Activated CD4-positive, alpha-beta T cell treated with anti-CD3 and anti-CD28 coated beads for 36 hours (primary cell): ENCODE measurements at regions of chr20 and their contacts with region 1.

Region 1: GRCh38 chr20:2688041-2688591 is 4.5 kb upstream of the EBF4 start:
- DNase-seq: peak; percentile 91
- ATAC-seq: peak; percentile 95
- H3K4me3 Mint-ChIP-seq: no peak overlapping the region
- H3K27ac Mint-ChIP-seq: peak overlapping the region; percentile 33
- H3K4me1 Mint-ChIP-seq: peaks cover 18% of the 10 kb centered on the region
- H3K27me3 Mint-ChIP-seq: peaks cover 18% of the 10 kb centered on the region

Region 2: GRCh38 chr20:2698921-2699335 is 10.8 kb after region 1 on chr20:
- CTCF ChIA-PET with region 1: no interaction called
- POLR2A ChIA-PET with region 1: no interaction called
- intact Hi-C with region 1: no loop called
- DNase-seq: no peak
- ATAC-seq: no peak
- H3K4me3 Mint-ChIP-seq: no peak overlapping the region
- H3K27ac Mint-ChIP-seq: no peak overlapping the region
- H3K4me1 Mint-ChIP-seq: no peaks in the 10 kb centered on the region
- H3K27me3 Mint-ChIP-seq: peaks cover 30% of the 10 kb centered on the region

Region 3: DNA sequence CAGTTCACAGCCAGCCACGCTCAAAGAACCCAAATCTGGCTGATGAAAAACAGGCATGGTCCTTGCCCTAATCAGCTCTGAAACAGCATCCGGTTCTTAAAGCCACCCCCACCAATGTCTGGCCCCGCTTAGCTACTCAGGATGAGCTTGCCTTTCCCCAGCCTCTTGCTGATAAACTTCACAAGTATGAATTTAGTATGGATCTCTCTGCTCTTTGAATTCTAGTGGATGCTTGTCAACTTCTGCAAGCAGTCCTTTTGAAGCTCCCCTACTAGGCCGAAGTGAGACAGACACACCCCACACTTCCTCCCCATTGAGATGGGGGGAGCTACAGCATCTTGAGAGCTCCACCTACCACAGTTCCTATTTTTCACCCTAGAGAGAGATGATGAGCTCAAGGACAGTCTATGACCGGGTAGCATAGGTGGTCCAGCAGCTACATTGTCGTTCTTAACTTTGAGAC is 41.2 kb after region 1 on chr20:
- CTCF ChIA-PET with region 1: interaction called, 30 read pairs
- POLR2A ChIA-PET with region 1: no interaction called
- intact Hi-C with region 1: no loop called
- DNase-seq: peak; percentile 36
- ATAC-seq: peak; percentile 90
- H3K4me3 Mint-ChIP-seq: peak overlapping the region; percentile 2
- H3K27ac Mint-ChIP-seq: peak overlapping the region; percentile 79
- H3K4me1 Mint-ChIP-seq: peaks cover 21% of the 10 kb centered on the region
- H3K27me3 Mint-ChIP-seq: no peaks in the 10 kb centered on the region

Region 4: DNA sequence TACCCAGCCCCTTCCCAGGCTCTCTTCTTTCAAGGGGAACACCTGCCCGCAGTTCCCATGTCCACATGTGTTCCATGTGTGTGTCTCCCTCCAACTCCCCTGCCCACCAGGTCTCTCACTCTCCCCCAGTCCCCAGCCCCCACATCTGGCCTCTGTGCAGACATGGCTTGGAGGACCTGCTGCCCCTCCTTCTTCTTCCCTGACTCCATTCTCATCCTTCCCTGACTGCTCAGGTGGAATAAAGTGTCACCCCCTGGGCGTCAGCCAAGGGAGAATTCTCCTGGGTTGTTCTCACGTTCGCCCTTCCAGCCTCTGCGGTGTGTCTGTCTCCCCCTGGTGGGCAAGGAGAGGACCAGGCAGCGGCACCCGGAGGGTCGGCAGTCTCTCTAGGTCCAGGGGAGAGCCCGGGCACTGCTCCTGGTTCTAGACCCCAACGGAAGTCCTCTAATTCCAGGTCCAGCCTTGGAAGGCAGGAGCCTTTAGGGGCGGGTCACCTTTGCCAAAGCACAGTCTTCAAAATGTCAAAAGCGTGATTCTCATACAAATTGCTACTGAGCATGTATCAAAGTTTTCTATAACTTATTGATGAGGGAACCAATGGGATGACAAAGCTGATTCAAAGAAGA is 54.9 kb after region 1 on chr20:
- CTCF ChIA-PET with region 1: interaction called, 71 read pairs
- POLR2A ChIA-PET with region 1: no interaction called
- intact Hi-C with region 1: loop called (anchors 1 kb)
- DNase-seq: peak; percentile 83
- ATAC-seq: peak; percentile 73
- H3K4me3 Mint-ChIP-seq: no peak overlapping the region
- H3K27ac Mint-ChIP-seq: peak overlapping the region; percentile 63
- H3K4me1 Mint-ChIP-seq: peaks cover 45% of the 10 kb centered on the region
- H3K27me3 Mint-ChIP-seq: no peaks in the 10 kb centered on the region

Region 5: GRCh38 chr20:2752567-2753460 is 64.7 kb after region 1 on chr20:
- CTCF ChIA-PET with region 1: interaction called, 45 read pairs
- POLR2A ChIA-PET with region 1: no interaction called
- intact Hi-C with region 1: loop called (anchors 1 to 2 kb)
- DNase-seq: peak; percentile 67
- ATAC-seq: peak; percentile 28
- H3K4me3 Mint-ChIP-seq: peak overlapping the region; percentile 69
- H3K27ac Mint-ChIP-seq: peak overlapping the region; percentile 34
- H3K4me1 Mint-ChIP-seq: peaks cover 32% of the 10 kb centered on the region
- H3K27me3 Mint-ChIP-seq: peaks cover 34% of the 10 kb centered on the region

Region 6: DNA sequence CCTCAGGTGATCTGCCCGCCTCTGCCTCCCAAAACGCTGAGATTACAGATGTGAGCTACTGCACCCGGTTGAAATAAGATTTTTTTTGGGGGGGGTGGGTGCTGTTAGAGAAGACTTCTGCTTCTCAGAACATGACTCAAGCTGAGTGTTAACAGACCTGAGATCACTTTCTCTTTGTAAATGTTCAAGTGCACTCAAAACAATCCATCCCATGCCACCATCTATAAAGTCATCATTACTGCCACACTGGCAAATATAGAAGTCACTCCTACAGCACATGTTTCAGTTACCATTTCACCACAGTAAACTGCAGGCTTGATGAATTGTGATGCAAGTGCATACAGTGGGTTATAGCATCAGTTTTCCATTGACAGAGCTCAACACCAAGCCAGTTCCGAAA is 161.4 kb after region 1 on chr20:
- CTCF ChIA-PET with region 1: interaction called, 3 read pairs
- POLR2A ChIA-PET with region 1: interaction called, 5 read pairs
- intact Hi-C with region 1: loop called in 1 of 2 experiments (anchors 2 kb)
- DNase-seq: peak; percentile 29
- ATAC-seq: peak; percentile 89
- H3K4me3 Mint-ChIP-seq: no peak overlapping the region
- H3K27ac Mint-ChIP-seq: no peak overlapping the region
- H3K4me1 Mint-ChIP-seq: peaks cover 26% of the 10 kb centered on the region
- H3K27me3 Mint-ChIP-seq: no peaks in the 10 kb centered on the region

Region 7: GRCh38 chr20:3000852-3001523 is 312.9 kb after region 1 on chr20:
- CTCF ChIA-PET with region 1: interaction called, 30 read pairs
- POLR2A ChIA-PET with region 1: no interaction called
- intact Hi-C with region 1: loop called (anchors 1 to 2 kb)
- DNase-seq: peak; percentile 23
- ATAC-seq: peak; percentile 98
- H3K4me3 Mint-ChIP-seq: no peak overlapping the region
- H3K27ac Mint-ChIP-seq: peak overlapping the region; percentile 59
- H3K4me1 Mint-ChIP-seq: peaks cover 11% of the 10 kb centered on the region
- H3K27me3 Mint-ChIP-seq: no peaks in the 10 kb centered on the region

Region 8: DNA sequence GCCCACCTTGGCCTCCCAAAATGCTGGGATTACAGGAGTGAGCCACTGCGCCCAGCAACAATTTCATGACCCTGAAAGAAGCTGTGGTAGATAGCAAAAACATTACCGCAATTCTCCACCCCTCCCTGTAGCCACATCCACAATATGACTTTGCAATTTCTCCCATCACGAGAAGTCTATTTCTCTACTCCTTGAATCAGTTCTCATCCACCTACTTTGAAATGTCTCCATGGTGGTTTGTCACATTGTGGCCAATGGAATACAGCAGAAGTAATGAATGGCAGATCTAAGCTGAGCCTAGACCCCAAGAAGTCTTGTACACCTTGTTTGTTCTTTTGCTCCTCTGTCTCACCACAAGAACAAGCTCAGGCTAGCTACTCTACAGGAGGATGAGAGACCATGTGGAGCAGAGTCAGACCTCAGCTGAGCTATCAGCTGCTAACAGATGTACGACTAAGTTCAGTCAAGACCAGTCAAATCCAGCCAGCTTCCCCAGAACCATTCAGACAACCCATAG is 389.6 kb after region 1 on chr20:
- CTCF ChIA-PET with region 1: interaction called, 3 read pairs
- POLR2A ChIA-PET with region 1: no interaction called
- intact Hi-C with region 1: loop called in 1 of 2 experiments (anchors 5 kb)
- DNase-seq: peak; percentile 35
- ATAC-seq: peak; percentile 47
- H3K4me3 Mint-ChIP-seq: peak overlapping the region; percentile 0
- H3K27ac Mint-ChIP-seq: peak overlapping the region; percentile 55
- H3K4me1 Mint-ChIP-seq: peaks cover 27% of the 10 kb centered on the region
- H3K27me3 Mint-ChIP-seq: peaks cover 26% of the 10 kb centered on the region